ENCODE measurements at regions of chr2 and their contacts with region 1.

Region 1: GRCh38 chr2:229980431-229981184 is 58.3 kb downstream of the FBXO36 start:
- DNase-seq: peak; percentile 17
- ATAC-seq: peak; percentile 91
- H3K4me3 ChIP-seq: no peak overlapping the region
- H3K27ac ChIP-seq: no peak overlapping the region
- H3K4me1 ChIP-seq: peaks cover 10% of the 10 kb centered on the region
- H3K27me3 ChIP-seq: no peaks in the 10 kb centered on the region
- CTCF ChIP-seq: no peak
- EP300 ChIP-seq: no peak
- POLR2A ChIP-seq: no peak
- RAD21 ChIP-seq: no peak

Region 2: DNA sequence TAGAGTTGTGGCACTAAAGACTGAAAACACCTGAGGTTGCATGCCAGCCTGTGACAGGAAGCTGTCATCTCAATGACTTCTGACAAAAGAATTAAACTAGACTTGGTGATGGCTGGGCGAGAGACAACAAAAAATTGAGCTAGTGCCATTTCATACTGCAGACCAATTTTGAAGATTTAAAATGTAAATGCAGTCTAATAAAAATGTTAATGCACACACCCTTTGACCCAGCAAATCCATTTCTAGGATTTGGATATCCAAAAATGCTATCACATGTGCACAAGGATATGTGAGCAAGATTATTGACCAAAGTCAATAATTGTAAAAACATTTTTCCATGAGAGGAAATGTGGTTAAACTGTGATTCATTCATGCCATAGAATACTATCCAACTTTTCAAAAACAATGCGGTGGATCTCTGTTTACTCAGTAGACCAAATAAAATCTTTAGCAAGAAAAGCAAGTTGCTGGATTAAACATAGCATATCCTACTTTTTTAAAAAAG is 52.7 kb before region 1 on chr2:
- CTCF ChIA-PET with region 1: no interaction called
- POLR2A ChIA-PET with region 1: interaction called, 11 read pairs
- RAD21 ChIA-PET with region 1: no interaction called
- SMC1A ChIA-PET with region 1: interaction called, 3 read pairs
- in situ Hi-C with region 1: no loop called
- intact Hi-C with region 1: no loop called
- DNase-seq: no peak
- ATAC-seq: no peak
- H3K4me3 ChIP-seq: no peak overlapping the region
- H3K27ac ChIP-seq: no peak overlapping the region
- H3K4me1 ChIP-seq: no peaks in the 10 kb centered on the region
- H3K27me3 ChIP-seq: no peaks in the 10 kb centered on the region
- CTCF ChIP-seq: no peak
- EP300 ChIP-seq: no peak
- POLR2A ChIP-seq: no peak
- RAD21 ChIP-seq: no peak

Measured in GM12878 (cell line).